ENCODE measurements at regions of chr17 and their contacts with region 1.

Region 1: DNA sequence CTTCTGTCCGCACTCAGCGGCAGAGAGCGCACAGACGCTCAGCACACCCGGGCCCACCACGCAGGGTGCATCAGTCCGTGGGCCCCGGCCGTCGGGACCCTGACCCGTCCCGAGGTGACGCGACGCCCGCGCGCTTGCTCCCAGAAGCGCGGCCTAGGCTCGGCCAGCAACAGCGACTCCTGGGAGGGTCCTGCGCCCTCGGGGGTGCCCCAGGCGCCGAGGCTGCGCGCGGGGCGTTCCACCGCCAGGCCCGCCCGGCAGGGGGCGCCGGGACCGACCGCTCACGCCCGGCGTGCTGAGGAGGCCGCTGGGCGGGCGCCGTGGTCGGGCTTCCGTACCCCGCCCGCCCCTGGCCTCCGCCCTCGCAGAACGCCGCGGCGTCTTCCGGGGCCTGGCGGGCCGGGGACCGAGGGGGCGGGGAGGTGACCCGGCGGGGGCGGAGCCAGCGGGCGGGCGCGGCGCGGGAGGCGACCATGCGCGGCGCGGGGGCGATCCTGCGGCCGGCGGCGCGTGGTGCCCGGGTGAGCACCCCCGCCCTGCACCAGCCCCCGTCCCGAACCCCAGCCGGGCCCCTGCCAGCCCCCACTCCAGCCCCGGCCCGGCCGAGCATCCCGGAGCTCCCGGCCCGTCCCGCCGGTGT is at the start of gene CISD3:
- DNase-seq: peak; percentile 81
- H3K4me3 ChIP-seq: peak within 1 kb of the TSS; percentile 51 to 66
- H3K27ac ChIP-seq: peak within 1 kb of the TSS; percentile 81
- H3K4me1 ChIP-seq: peaks cover 31% of the 10 kb centered on the region
- H3K27me3 ChIP-seq: no peaks in the 10 kb centered on the region
- CTCF ChIP-seq: peak; percentile 78 to 97 (median 92)
- POLR2A ChIP-seq: no peak
- total RNA-seq, gene CISD3: 17.1 to 17.8 TPM

Region 2: DNA sequence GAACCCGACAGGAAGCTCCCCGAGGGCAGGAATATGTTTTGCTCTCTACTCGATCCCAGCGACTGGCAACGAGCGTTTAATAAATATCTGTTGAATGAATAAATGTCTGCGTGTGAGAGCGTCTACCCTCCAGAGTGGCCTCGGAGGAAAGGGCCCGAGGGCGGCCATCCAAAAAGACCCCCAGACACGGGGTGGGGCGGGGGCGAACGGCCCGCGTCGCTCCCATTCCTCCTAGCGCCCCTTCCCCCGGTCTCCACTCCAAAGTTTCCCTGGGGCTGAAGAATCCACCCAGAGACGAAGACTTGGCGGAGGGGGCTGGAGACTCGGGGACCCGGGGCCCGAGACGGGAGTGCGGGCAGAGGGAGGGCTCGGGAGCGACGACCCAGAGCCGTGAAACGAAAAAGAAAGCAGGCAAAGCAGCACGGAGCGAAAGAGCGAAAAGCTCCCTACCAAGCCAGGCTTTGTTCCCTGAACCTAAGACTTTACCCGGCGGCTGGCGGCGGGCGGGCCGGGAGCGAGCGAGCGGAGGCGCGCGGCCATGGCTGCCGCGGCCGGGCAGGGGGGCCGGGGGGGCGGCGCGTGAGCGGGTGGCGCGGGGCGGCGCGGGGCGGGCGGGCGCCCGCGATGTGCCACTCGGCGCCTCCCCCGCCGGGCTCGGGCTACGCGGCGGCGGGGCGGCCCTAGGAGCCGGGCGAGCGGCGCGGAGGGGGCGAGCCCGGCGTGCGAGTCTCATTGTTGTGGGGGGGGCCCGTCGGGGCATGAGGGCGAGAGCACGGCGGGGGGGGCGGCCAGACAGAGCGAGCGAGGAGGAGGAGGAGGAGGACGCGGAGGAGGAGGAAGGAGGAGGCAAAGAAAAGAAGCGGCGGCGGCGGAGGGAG is 25.1 kb before region 1 on chr17 and contains the start of gene MLLT6:
- intact Hi-C with region 1: loop called (anchors 1 kb)
- DNase-seq: peak; percentile 72
- H3K4me3 ChIP-seq: peak within 1 kb of the TSS; percentile 86 to 98
- H3K27ac ChIP-seq: peak within 1 kb of the TSS; percentile 96 to 98
- H3K4me1 ChIP-seq: peaks cover 4% of the 10 kb centered on the region
- H3K27me3 ChIP-seq: no peaks in the 10 kb centered on the region
- CTCF ChIP-seq: no peak
- POLR2A ChIP-seq: peak; percentile 53
- total RNA-seq, gene MLLT6: 69.1 to 142 TPM